ENCODE measurements at regions of chr5 and their contacts with region 1.

Region 1: GRCh38 chr5:134603059-134603458 is 29.6 kb downstream of the SAR1B start:
- DNase-seq: no peak
- ATAC-seq: peak; percentile 91
- H3K4me3 Mint-ChIP-seq: peak overlapping the region; percentile 10
- H3K27ac Mint-ChIP-seq: peak overlapping the region; percentile 25
- H3K4me1 Mint-ChIP-seq: peaks cover 54% of the 10 kb centered on the region
- H3K27me3 Mint-ChIP-seq: no peaks in the 10 kb centered on the region

Region 2: GRCh38 chr5:134592141-134592746 is 10.8 kb before region 1 on chr5:
- CTCF ChIA-PET with region 1: interaction called, 34 read pairs
- POLR2A ChIA-PET with region 1: no interaction called
- intact Hi-C with region 1: loop called in 1 of 2 experiments (anchors 1 kb)
- DNase-seq: no peak
- ATAC-seq: no peak
- H3K4me3 Mint-ChIP-seq: no peak overlapping the region
- H3K27ac Mint-ChIP-seq: no peak overlapping the region
- H3K4me1 Mint-ChIP-seq: peaks cover 19% of the 10 kb centered on the region
- H3K27me3 Mint-ChIP-seq: peaks cover 3% of the 10 kb centered on the region

Region 3: DNA sequence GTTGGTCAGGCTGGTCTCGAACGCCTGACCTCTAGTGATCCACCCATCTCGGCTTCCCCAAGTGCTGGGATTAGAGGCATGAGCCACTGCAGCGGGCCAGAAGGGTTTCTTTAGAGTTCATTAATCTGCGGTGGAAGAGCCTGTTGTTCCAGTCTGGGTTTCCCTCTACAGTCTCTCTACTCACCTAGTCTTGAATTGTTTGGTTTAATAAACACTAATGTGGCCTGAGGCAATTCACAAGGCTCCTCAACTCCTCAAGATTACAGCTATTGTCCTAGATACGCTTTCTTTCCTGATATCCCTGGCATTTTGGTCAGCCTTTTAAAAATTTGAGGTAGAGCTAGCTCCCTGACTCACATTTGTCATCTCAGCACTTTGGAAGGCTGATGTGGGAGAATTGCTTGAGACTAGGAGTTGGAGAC is 34.1 kb after region 1 on chr5:
- CTCF ChIA-PET with region 1: interaction called, 4 read pairs
- POLR2A ChIA-PET with region 1: interaction called, 12 read pairs
- intact Hi-C with region 1: loop called in 1 of 2 experiments (anchors 1 kb)
- DNase-seq: no peak
- ATAC-seq: no peak
- H3K4me3 Mint-ChIP-seq: no peak overlapping the region
- H3K27ac Mint-ChIP-seq: no peak overlapping the region
- H3K4me1 Mint-ChIP-seq: peaks cover 6% of the 10 kb centered on the region
- H3K27me3 Mint-ChIP-seq: no peaks in the 10 kb centered on the region